Heart right ventricle (tissue), 16 donors: ENCODE measurements at regions of chr9 and their contacts with region 1.

Region 1: DNA sequence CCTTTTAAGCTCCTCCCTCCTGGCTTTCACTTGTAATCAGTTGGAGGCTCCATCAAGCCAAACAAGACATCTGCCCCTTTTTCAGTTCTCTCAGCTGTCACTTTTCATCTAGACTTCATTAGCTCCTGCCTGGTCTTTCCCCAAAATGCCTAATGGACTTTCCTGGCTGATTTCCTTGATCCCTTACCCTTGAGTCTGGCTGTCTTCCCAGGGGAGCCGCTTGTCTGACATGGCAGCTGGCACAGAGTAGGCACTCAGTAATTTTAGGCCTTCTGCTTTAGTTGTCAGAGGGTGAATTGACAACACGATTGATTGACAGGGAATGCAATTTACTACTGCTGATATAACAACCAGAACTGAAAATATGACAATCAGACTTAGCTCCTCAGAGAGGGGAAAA is 2.1 kb downstream of the C9orf153 start:
- DNase-seq: no peak
- ATAC-seq: peak in 5 of 8 donors; percentile 39 to 70 (median 64)
- H3K4me3 ChIP-seq: no peak overlapping the region
- H3K27ac ChIP-seq: no peak overlapping the region
- H3K4me1 ChIP-seq: peaks cover 0 to 7% (median 0%) of the 10 kb centered on the region in 9 donors
- H3K27me3 ChIP-seq: no peaks in the 10 kb centered on the region
- CTCF ChIP-seq: no peak

Region 2: DNA sequence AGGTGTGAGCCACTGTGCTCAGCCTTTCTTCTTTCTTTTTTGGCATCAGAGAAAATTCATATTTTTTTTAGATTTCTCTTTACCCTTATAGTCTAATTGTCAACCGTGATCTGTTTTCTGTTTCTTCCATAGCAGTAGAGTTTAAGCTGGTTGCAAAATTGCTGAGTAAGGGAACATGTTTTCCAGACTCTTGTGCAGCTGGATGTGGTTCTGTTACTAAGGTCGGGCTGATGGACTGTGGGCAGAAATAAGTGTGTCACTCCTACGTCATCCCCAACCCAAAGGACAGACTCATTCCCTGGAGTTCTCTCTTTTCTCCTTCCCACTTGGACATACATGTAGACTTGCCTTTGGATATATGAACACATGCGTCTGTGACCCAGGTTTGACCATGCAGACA is 93.9 kb before region 1 on chr9:
- intact Hi-C with region 1: no loop called
- DNase-seq: no peak
- ATAC-seq: no peak
- H3K4me3 ChIP-seq: no peak overlapping the region
- H3K27ac ChIP-seq: no peak overlapping the region
- H3K4me1 ChIP-seq: no peaks in the 10 kb centered on the region
- H3K27me3 ChIP-seq: no peaks in the 10 kb centered on the region
- CTCF ChIP-seq: no peak

Region 3: GRCh38 chr9:86193088-86193487 is 64.3 kb before region 1 on chr9:
- intact Hi-C with region 1: loop called in 1 of 10 experiments (anchors 10 kb)
- DNase-seq: no peak
- ATAC-seq: no peak
- H3K4me3 ChIP-seq: no peak overlapping the region
- H3K27ac ChIP-seq: no peak overlapping the region
- H3K4me1 ChIP-seq: peaks cover 0 to 4% (median 0%) of the 10 kb centered on the region in 9 donors
- H3K27me3 ChIP-seq: no peaks in the 10 kb centered on the region
- CTCF ChIP-seq: no peak